ENCODE measurements at regions of chr6 and their contacts with region 1.

Region 1: GRCh38 chr6:137271245-137272183 is 52.3 kb upstream of the IFNGR1 start:
- DNase-seq: peak in 2 of 9 experiments; percentile 56 to 66
- ATAC-seq: peak; percentile 69
- H3K4me3 ChIP-seq: no peak overlapping the region
- H3K4me3 Mint-ChIP-seq: no peak overlapping the region
- H3K27ac ChIP-seq: no peak overlapping the region
- H3K27ac Mint-ChIP-seq: no peak overlapping the region
- H3K4me1 ChIP-seq: no peaks in the 10 kb centered on the region
- H3K4me1 Mint-ChIP-seq: peaks cover 17% of the 10 kb centered on the region
- H3K27me3 ChIP-seq: no peaks in the 10 kb centered on the region
- H3K27me3 Mint-ChIP-seq: peaks cover 2% of the 10 kb centered on the region
- CTCF ChIP-seq: peak; percentile 95

Region 2: GRCh38 chr6:137076277-137077068 is 195.0 kb before region 1 on chr6:
- CTCF ChIA-PET with region 1: no interaction called
- POLR2A ChIA-PET with region 1: no interaction called
- intact Hi-C with region 1: loop called in 1 of 2 experiments (anchors 1 kb)
- DNase-seq: peak; percentile 22 to 71 (median 47)
- ATAC-seq: peak; percentile 62
- H3K4me3 ChIP-seq: no peak overlapping the region
- H3K4me3 Mint-ChIP-seq: no peak overlapping the region
- H3K27ac ChIP-seq: no peak overlapping the region
- H3K27ac Mint-ChIP-seq: no peak overlapping the region
- H3K4me1 ChIP-seq: no peaks in the 10 kb centered on the region
- H3K4me1 Mint-ChIP-seq: no peaks in the 10 kb centered on the region
- H3K27me3 ChIP-seq: no peaks in the 10 kb centered on the region
- H3K27me3 Mint-ChIP-seq: peaks cover 16% of the 10 kb centered on the region
- CTCF ChIP-seq: peak; percentile 57

Region 3: DNA sequence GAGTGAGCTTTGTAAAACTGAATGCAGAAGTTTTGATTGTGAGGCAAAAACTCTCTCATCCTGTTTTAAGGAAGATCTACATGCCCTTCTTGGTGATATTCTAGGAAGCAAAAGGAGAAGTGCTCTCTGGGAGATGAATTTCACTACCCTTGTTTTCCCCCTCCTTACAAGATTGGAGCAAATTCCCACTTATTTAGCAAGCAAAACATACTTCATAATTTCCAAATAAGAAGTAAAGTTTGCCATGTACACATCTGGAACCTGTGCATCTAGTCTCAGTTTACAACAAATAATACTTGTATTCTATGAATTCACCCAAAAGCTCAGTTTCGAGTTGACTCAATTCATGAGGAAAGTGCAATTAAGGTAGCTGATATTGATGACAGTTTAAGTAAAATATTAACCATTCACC is 24.7 kb before region 1 on chr6:
- CTCF ChIA-PET with region 1: no interaction called
- POLR2A ChIA-PET with region 1: no interaction called
- intact Hi-C with region 1: no loop called
- DNase-seq: no peak
- ATAC-seq: no peak
- H3K4me3 ChIP-seq: no peak overlapping the region
- H3K4me3 Mint-ChIP-seq: no peak overlapping the region
- H3K27ac ChIP-seq: no peak overlapping the region
- H3K27ac Mint-ChIP-seq: no peak overlapping the region
- H3K4me1 ChIP-seq: no peaks in the 10 kb centered on the region
- H3K4me1 Mint-ChIP-seq: no peaks in the 10 kb centered on the region
- H3K27me3 ChIP-seq: no peaks in the 10 kb centered on the region
- H3K27me3 Mint-ChIP-seq: no peaks in the 10 kb centered on the region
- CTCF ChIP-seq: no peak